HepG2 (cell line): ENCODE measurements at regions of chr1 and their contacts with region 1.

Region 1: DNA sequence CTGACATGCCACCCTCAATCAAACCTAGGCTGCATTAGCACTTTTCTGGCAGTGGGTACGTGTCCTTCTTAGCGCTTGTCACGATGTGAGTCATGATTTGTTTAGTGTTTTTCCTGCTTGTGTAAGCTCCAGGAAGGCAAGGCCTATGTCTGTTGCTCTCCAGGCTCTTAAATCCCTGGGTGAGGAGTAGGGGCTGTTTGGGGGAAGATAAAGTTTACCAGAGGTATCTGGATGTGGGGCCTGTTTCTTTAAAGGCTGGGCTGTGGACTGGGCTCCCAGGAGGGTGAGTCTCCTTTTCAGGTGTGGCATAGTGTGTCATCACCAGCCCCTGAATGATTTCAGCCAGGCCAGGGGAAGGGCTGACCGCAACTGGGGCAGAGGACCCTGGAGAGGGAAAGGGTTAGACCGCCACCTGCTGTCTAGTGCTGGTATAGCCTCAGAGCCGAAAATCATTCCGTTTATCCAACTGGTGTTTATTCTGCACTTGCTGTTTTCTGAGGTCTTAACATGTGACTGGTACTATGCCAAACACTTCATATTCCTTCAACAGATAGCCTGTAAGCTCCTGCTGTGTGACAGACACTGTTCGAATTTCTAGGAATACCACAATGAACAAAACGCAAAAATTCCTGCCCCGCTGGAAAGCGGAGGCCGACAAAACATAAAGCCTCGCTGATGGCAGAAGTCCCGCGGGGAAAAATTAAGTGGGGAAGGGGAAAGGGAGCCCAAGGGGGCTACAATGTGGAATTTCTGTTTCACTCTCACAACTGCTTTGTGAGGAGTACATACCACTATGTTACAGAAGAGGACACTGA is 9.7 kb downstream of the SERINC2 start:
- DNase-seq: peak; percentile 70
- ATAC-seq: peak; percentile 87
- H3K4me3 ChIP-seq: no peak overlapping the region
- H3K27ac ChIP-seq: peak overlapping the region; percentile 62
- H3K4me1 ChIP-seq: peaks cover 72% of the 10 kb centered on the region
- H3K27me3 ChIP-seq: no peaks in the 10 kb centered on the region
- CTCF ChIP-seq: peak; percentile 94
- EP300 ChIP-seq: 0 out of 4 replicates have a peak, but pooled peaks of 1 of the 2 experiments have one; percentile 6
- POLR2A ChIP-seq: no peak
- RAD21 ChIP-seq: peak; percentile 94

Region 2: GRCh38 chr1:31394628-31395193 is 28.0 kb before region 1 on chr1:
- CTCF ChIA-PET with region 1: interaction called, 95 read pairs
- POLR2A ChIA-PET with region 1: interaction called, 5 read pairs
- in situ Hi-C with region 1: loop called (anchors 5 kb)
- intact Hi-C with region 1: loop called (anchors 1 kb)
- DNase-seq: peak; percentile 57
- ATAC-seq: peak; percentile 94
- H3K4me3 ChIP-seq: peak overlapping the region; percentile 2 to 70 (median 12); a peak in 4 of 6 replicates
- H3K27ac ChIP-seq: no peak overlapping the region
- H3K4me1 ChIP-seq: peaks cover 55% of the 10 kb centered on the region
- H3K27me3 ChIP-seq: peaks cover 2 to 10% of the 10 kb centered on the region in 2 experiments; a peak in 4 of 5 replicates
- CTCF ChIP-seq: peak; percentile 96
- EP300 ChIP-seq: no peak
- POLR2A ChIP-seq: no peak
- RAD21 ChIP-seq: peak; percentile 95

Region 3: DNA sequence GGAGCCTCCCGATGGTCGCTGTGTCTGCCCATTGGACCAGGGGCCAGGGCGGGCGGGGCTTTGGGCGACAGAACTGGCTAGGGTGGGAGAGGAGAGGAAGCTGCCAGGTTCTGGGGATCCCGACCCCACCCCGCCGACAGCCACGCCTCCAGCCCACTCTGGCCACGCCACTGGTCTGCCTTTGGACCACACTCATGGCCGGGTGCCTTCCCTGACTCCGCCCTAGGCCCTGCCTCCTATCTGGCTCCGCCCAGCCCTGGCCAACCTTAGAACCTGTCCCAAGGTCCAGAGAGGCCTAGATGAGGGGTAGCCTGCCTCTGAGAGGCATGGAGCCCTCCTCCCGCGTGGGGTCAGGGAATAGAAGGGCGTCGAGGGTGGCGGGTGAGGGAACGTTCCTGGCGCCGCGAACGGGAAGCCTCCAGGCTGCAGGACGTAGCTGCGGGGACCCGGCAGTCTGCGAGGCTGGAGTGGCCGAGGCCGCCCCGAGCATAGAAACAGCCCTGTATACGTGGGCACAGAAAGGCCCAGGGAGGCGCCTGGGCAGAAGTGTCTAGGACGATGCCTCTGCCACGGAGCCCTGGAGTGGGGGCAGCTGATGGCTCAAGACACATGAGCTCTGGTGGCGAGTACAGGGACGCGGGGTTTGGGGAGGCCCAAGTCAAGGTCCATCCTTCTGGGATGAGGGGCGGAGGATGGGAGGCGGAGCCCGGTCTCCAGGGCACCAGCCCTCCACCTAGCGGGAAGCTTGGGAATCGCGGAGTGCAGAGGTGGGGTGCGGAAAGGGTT is 292.6 kb after region 1 on chr1:
- CTCF ChIA-PET with region 1: no interaction called
- POLR2A ChIA-PET with region 1: no interaction called
- in situ Hi-C with region 1: no loop called
- intact Hi-C with region 1: no loop called
- DNase-seq: peak; percentile 86
- ATAC-seq: peak; percentile 96
- H3K4me3 ChIP-seq: peak overlapping the region; percentile 63 to 82 (median 71)
- H3K27ac ChIP-seq: peak overlapping the region; percentile 93
- H3K4me1 ChIP-seq: peaks cover 31% of the 10 kb centered on the region
- H3K27me3 ChIP-seq: no peaks in the 10 kb centered on the region; a peak in 1 of 5 replicates
- CTCF ChIP-seq: peak; percentile 89
- EP300 ChIP-seq: peak; percentile 11 to 35; a peak in 1 of 4 replicates
- POLR2A ChIP-seq: peak; percentile 85 to 95
- RAD21 ChIP-seq: peak; percentile 73